Panc1 (cell line): ENCODE measurements at regions of chr15 and their contacts with region 1.

Region 1: GRCh38 chr15:50145451-50145872 is 26.4 kb upstream of the ATP8B4 start:
- DNase-seq: peak; percentile 45
- ATAC-seq: peak; percentile 89
- H3K4me3 ChIP-seq: no peak overlapping the region
- H3K27ac ChIP-seq: no peak overlapping the region
- H3K4me1 ChIP-seq: no peaks in the 10 kb centered on the region
- H3K27me3 ChIP-seq: no peaks in the 10 kb centered on the region
- CTCF ChIP-seq: peak; percentile 56; the same call in 1 of the 2 replicates

Region 2: DNA sequence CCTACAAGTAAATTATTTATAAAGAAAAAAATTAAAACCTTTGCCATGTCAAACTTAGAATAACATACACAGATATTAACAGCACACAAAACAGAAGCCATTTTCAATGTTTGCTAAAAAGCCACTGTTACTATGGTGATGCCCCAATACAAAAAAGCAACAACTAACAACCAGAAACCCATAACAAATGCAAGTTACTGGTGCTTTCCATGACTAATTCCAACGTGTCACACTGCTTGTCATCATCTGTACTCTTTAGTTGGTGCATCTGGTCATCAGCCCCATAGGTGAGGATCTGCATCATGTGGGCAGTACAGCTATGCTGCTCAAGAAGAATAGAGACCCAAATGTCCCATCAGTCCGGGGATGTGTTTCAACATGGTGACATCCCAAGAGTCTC is 79.3 kb before region 1 on chr15:
- CTCF ChIA-PET with region 1: no interaction called
- POLR2A ChIA-PET with region 1: no interaction called
- in situ Hi-C with region 1: no loop called
- intact Hi-C with region 1: no loop called
- DNase-seq: no peak
- ATAC-seq: no peak
- H3K4me3 ChIP-seq: no peak overlapping the region
- H3K27ac ChIP-seq: no peak overlapping the region
- H3K4me1 ChIP-seq: no peaks in the 10 kb centered on the region
- H3K27me3 ChIP-seq: no peaks in the 10 kb centered on the region
- CTCF ChIP-seq: no peak

Region 3: GRCh38 chr15:50315814-50316630 is 170.6 kb after region 1 on chr15:
- CTCF ChIA-PET with region 1: interaction called, 14 read pairs
- POLR2A ChIA-PET with region 1: no interaction called
- in situ Hi-C with region 1: no loop called
- intact Hi-C with region 1: loop called (anchors 5 kb)
- DNase-seq: peak; percentile 12
- ATAC-seq: peak; percentile 76
- H3K4me3 ChIP-seq: no peak overlapping the region
- H3K27ac ChIP-seq: no peak overlapping the region
- H3K4me1 ChIP-seq: no peaks in the 10 kb centered on the region
- H3K27me3 ChIP-seq: no peaks in the 10 kb centered on the region
- CTCF ChIP-seq: peak; percentile 68

Region 4: DNA sequence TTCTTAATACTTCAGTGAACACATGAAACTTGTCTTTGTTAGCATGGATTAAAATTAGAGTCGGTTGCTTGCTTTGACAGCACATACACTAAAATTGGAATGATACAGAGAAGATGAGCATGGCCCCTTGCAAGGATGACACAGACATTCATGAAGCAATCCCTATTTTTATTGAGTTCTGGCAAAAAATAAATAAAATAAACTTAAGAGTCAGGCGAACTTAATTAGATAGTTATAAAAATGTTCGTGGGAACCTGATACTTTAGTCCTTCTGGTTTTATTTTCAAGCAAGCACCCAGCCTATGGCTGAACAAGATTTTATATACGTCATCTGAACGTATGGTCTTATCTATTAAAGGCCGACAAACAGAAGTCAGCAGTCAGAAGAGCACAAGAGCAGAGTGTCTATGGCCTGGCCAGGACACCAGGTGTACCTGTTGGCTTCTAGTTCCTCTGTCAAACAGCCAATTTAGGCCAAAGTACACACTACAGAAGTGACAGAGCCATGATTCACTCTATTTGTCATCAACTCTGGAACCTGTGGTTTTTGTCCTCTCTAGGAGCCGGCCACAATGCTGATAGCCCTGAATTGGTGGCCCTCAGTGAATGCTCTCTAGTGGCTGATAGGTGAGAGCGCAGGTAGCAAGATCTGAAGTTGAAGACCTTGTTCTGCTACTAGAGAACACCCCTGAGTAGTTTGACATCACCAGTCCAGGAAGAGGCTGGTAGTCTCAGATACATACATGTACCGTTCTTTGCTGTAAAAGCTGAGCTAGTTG is 1761.9 kb after region 1 on chr15:
- CTCF ChIA-PET with region 1: no interaction called
- POLR2A ChIA-PET with region 1: no interaction called
- in situ Hi-C with region 1: no loop called
- intact Hi-C with region 1: no loop called
- DNase-seq: peak; percentile 84
- ATAC-seq: peak; percentile 96
- H3K4me3 ChIP-seq: no peak overlapping the region
- H3K27ac ChIP-seq: no peak overlapping the region
- H3K4me1 ChIP-seq: peaks cover 11% of the 10 kb centered on the region; the same call in 1 of the 2 replicates
- H3K27me3 ChIP-seq: no peaks in the 10 kb centered on the region
- CTCF ChIP-seq: peak; percentile 53